HepG2 (cell line): ENCODE measurements at regions of chr1 and their contacts with region 1.

Region 1: GRCh38 chr1:151934048-151934493 is 24.8 kb upstream of the THEM4 start:
- DNase-seq: peak; percentile 39
- ATAC-seq: peak; percentile 87
- H3K4me3 ChIP-seq: no peak overlapping the region
- H3K27ac ChIP-seq: no peak overlapping the region
- H3K4me1 ChIP-seq: no peaks in the 10 kb centered on the region
- H3K27me3 ChIP-seq: no peaks in the 10 kb centered on the region
- CTCF ChIP-seq: peak; percentile 84
- EP300 ChIP-seq: no peak
- POLR2A ChIP-seq: no peak
- RAD21 ChIP-seq: peak; percentile 79

Region 2: GRCh38 chr1:151888972-151889570 is 45.0 kb before region 1 on chr1:
- CTCF ChIA-PET with region 1: no interaction called
- POLR2A ChIA-PET with region 1: no interaction called
- in situ Hi-C with region 1: no loop called
- intact Hi-C with region 1: loop called (anchors 5 kb)
- DNase-seq: no peak
- ATAC-seq: no peak
- H3K4me3 ChIP-seq: no peak overlapping the region
- H3K27ac ChIP-seq: no peak overlapping the region
- H3K4me1 ChIP-seq: no peaks in the 10 kb centered on the region
- H3K27me3 ChIP-seq: no peaks in the 10 kb centered on the region
- CTCF ChIP-seq: peak; percentile 38
- EP300 ChIP-seq: no peak
- POLR2A ChIP-seq: no peak
- RAD21 ChIP-seq: no peak

Region 3: GRCh38 chr1:151968058-151968457 is 34.0 kb after region 1 on chr1:
- CTCF ChIA-PET with region 1: interaction called, 6 read pairs
- POLR2A ChIA-PET with region 1: no interaction called
- in situ Hi-C with region 1: no loop called
- intact Hi-C with region 1: loop called (anchors 2 kb)
- DNase-seq: peak; percentile 66
- ATAC-seq: peak; percentile 93
- H3K4me3 ChIP-seq: no peak overlapping the region
- H3K27ac ChIP-seq: no peak overlapping the region
- H3K4me1 ChIP-seq: peaks cover 20% of the 10 kb centered on the region
- H3K27me3 ChIP-seq: no peaks in the 10 kb centered on the region; a peak in 1 of 5 replicates
- CTCF ChIP-seq: peak; percentile 94
- EP300 ChIP-seq: no peak
- POLR2A ChIP-seq: no peak
- RAD21 ChIP-seq: peak; percentile 90

Region 4: DNA sequence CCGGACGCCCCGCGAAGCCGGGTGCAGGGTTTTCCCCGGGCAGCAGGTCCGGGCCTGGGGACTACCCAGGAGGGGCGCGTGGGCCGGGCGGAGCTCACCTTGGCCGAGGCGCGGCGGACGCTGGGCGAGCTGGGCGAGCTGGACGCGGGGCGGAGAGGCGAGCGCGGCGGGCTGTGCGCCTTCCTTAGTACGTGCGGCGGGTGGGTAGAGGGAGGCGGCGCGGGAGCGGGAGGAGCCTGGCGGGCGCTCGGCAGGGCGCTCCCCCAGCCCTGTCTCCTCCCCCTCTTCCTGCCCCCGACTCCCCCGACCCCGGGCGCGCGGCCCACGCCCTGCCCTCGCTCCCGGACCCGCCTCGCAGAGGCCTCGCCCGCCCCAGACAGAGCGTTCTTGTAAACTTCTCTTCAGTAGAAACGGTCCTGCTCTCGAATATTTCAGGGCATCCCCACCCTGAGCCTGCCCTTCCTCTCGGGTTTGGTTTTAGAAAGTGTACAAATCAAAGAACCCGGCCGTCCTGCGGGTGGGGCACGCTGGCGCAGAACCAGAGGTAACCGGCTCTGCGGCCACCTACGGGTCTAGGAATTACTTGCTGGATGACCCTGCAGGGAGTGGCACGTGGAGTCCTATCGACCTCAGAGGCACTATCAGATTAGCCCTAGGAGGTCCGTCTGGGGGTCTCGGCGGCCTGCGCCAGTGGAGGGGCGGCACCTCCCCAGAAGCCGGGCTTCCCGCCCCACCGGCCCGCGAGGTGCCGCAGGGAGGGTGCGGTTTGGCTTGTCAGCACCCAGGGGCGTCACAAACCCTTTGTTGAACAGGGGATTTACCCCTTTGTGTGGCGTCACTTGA is 59.8 kb after region 1 on chr1 and contains the start of gene S100A10:
- CTCF ChIA-PET with region 1: interaction called, 9 read pairs
- POLR2A ChIA-PET with region 1: no interaction called
- in situ Hi-C with region 1: loop called (anchors 5 kb)
- intact Hi-C with region 1: no loop called
- DNase-seq: peak; percentile 46
- ATAC-seq: peak; percentile 82
- H3K4me3 ChIP-seq: peak within 1 kb of the TSS; percentile 69 to 89 (median 81)
- H3K27ac ChIP-seq: peak within 1 kb of the TSS; percentile 50
- H3K4me1 ChIP-seq: peaks cover 56% of the 10 kb centered on the region
- H3K27me3 ChIP-seq: no peaks in the 10 kb centered on the region; a peak in 1 of 5 replicates
- CTCF ChIP-seq: no peak
- EP300 ChIP-seq: no peak
- POLR2A ChIP-seq: peak in 1 of 2 experiments; percentile 78; a peak in 2 of 4 replicates
- RAD21 ChIP-seq: no peak
- total RNA-seq, gene S100A10: 16.8 and 25.6 TPM in 2 replicates

Region 5: GRCh38 chr1:152001391-152002249 is 67.5 kb after region 1 on chr1:
- CTCF ChIA-PET with region 1: interaction called, 33 read pairs
- POLR2A ChIA-PET with region 1: interaction called, 3 read pairs
- in situ Hi-C with region 1: loop called (anchors 5 kb)
- intact Hi-C with region 1: loop called (anchors 1 kb)
- DNase-seq: peak; percentile 72
- ATAC-seq: peak; percentile 74
- H3K4me3 ChIP-seq: no peak overlapping the region
- H3K27ac ChIP-seq: no peak overlapping the region
- H3K4me1 ChIP-seq: peaks cover 11% of the 10 kb centered on the region
- H3K27me3 ChIP-seq: peaks cover 0 to 5% of the 10 kb centered on the region in 2 experiments; a peak in 2 of 5 replicates
- CTCF ChIP-seq: peak; percentile 81
- EP300 ChIP-seq: no peak
- POLR2A ChIP-seq: no peak
- RAD21 ChIP-seq: peak; percentile 84

Region 6: DNA sequence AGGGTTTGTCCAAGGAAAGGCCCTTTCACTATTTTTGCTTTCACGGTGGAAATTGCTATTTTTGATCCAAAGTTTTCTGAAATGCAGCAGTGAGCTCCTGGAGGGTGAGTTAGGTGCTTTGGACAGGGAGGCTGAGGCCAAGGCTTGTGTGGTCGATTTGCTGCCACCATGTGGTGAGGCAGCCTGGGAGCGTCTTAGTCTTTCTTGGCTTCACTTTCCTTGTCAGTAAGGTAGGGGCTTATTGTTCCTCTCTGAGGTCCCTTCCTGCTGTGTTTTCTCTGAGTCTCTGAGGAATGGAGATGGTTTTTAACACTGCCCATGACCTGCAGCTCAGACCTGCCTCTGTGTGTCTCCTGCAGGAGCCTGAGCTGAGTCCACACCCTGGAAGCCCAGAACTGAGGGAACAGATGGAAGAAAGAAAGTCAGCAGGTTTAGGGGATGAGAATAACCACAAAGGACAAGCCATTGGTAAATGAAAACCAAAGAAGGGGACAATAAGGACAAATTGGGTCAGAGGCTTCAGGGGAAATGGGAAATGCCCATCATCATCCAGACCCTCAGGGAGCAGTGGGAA is 79.7 kb after region 1 on chr1:
- CTCF ChIA-PET with region 1: interaction called, 13 read pairs
- POLR2A ChIA-PET with region 1: no interaction called
- in situ Hi-C with region 1: no loop called
- intact Hi-C with region 1: no loop called
- DNase-seq: no peak
- ATAC-seq: peak; percentile 53; the same call in 1 of the 3 replicates
- H3K4me3 ChIP-seq: no peak overlapping the region
- H3K27ac ChIP-seq: no peak overlapping the region
- H3K4me1 ChIP-seq: 0 out of 2 replicates have a peak, but pooled peaks cover 5% of the 10 kb centered on the region
- H3K27me3 ChIP-seq: peaks cover 0 to 3% of the 10 kb centered on the region in 2 experiments; a peak in 1 of 5 replicates
- CTCF ChIP-seq: peak; percentile 72
- EP300 ChIP-seq: no peak
- POLR2A ChIP-seq: no peak
- RAD21 ChIP-seq: no peak